ENCODE measurements at regions of chr21 and their contacts with region 1.

Region 1: DNA sequence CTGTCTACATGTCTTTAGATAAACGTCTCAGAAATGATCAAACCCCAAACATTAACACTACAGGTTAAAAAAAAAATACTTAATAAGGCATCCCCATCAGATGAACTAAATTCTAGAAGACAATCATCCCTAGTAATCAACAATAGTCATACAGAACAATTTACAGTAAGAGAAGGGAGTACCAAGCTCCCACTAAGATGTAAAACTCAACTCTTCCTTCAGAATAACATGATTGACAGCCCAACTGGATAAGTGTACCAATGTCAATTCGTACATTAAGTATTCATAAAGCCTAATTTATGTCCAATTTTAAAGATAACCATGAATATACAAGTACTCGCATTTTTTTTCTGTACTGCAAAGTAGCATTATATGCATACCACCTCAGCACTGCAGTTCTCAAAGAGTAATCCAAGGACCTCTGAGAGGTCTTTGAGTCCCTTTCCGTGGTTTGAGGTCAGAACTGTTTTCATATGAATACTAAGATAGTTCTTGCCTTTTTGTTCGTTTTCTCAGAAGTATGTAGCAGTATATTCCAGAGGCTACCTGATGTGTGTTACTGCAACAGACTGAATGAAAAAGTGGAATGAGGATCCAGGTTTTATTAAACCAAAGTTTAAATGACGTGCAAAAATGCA is 6.6 kb downstream of the SCAF4 start:
- DNase-seq: no peak
- ATAC-seq: no peak
- H3K4me3 ChIP-seq: no peak overlapping the region
- H3K4me1 ChIP-seq: peaks cover 9% of the 10 kb centered on the region
- CTCF ChIP-seq: no peak

Region 2: GRCh38 chr21:31659536-31660258 is 65.6 kb before region 1 on chr21 and contains the start of gene SOD1:
- intact Hi-C with region 1: loop called in 1 of 2 experiments (anchors 10 kb)
- DNase-seq: peak; percentile 97 to 98 (median 98)
- ATAC-seq: peak; percentile 93
- H3K4me3 ChIP-seq: peak within 1 kb of the TSS; percentile 42
- H3K4me1 ChIP-seq: peaks cover 24% of the 10 kb centered on the region
- CTCF ChIP-seq: no peak
- total RNA-seq, gene SOD1: 268 to 384 (median 269) TPM